HEK293T (cell line): ENCODE measurements at regions of chr19 and their contacts with region 1.

Region 1: GRCh38 chr19:10292206-10292788 is 2.5 kb downstream of the ICAM5 start:
- DNase-seq: peak; percentile 92

Region 2: DNA sequence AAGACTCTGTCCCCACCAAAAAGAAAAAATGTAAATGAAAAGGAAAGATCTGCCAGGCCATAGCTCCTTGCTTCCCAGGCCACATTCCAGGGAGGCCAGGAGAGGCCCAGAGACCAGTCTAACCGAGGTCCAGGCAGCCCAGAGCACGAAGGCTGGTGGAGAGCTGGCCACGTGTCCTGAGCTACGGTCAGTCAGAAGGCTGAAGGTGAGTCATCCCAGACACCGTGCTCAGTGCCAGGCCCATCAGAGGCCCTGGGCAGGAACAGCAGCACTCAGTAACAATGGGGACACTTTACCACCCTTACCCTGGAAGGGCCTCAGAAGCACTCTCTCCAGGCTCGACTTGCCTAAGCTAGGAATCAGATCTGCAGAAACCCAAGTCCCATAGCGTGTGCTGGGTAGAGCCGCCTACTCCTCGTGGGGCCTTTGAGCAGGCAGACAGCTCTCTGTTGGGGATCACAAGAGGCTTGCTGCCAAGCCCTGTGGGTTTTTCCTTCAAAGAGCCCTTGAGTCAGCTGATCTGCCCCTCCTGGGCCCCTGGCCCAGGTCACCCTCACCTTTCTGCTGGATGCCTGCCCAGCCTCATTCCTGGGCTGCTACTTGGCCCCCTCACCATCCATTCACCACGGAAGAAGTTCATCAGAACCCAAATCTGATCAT is 85.9 kb before region 1 on chr19:
- CTCF ChIA-PET with region 1: no interaction called
- POLR2A ChIA-PET with region 1: no interaction called
- DNase-seq: no peak

Region 3: GRCh38 chr19:10315335-10316214 is 23.3 kb after region 1 on chr19 and contains the start of gene FDX2:
- CTCF ChIA-PET with region 1: no interaction called
- POLR2A ChIA-PET with region 1: interaction called, 10 read pairs
- DNase-seq: peak; percentile 91

Region 4: DNA sequence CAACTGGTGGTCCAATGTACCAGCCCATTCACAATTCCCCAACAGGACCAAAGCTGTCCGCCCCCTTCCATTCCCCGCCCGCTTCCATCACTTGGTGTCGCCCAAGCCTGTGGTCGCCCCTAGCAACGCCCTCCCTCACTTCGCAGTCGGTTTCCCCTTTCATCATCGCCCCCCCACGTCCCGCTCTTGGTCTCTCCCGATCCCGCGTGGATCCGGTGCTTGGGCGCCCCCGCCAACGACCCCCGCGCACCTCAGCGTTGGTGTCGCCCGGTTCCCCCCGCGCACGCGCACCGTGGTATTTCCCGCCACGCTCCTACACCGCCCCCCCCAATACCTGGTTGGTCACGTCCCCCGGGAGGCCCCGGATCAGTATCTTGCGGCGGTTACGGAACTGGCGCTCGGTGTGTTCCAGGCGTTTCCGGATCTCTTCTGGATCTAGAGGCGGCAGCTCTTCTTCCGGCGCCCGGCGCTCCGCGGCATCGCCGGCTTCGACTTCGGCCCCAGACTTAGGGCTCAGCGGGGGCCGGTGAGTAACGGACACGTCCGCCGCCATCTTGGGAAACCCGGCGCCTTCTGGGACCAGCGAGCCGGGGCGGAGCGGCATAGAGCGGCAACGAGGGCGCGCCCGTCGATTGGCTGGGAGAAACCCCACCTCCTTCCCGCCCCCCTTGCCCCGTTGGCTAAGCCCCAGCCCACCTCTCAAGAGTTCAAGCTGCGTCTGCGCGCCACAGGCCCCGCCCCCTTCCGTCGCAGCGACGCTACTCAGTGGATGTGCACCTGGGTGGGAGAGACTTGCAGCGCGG is 40.9 kb after region 1 on chr19 and contains the start of gene RAVER1:
- CTCF ChIA-PET with region 1: no interaction called
- POLR2A ChIA-PET with region 1: interaction called, 41 read pairs
- DNase-seq: peak; percentile 98